Tibial artery (tissue), 4 donors: ENCODE measurements at regions of chr7 and their contacts with region 1.

Region 1: DNA sequence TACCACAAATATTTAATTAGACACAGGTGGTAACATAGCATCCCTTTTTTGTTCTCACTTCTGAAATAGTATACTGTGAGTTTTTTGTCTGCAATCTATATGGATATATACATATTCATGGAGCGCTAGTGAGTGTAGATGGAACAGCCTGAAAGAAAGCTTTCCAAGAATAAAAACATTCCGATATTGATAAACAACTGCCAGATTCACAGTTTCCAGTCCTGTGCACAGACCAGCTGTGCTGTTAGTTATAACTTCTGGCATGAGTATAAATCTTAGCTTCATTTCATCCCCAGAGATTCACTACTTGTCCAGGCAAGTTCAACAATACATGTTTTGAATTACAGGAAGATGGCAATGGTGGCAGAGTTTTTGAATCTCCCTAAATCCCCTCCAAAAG is 467.1 kb upstream of the STEAP1 start:
- DNase-seq: no peak
- H3K4me3 ChIP-seq: no peak overlapping the region
- H3K27ac ChIP-seq: no peak overlapping the region
- H3K4me1 ChIP-seq: no peaks in the 10 kb centered on the region
- H3K27me3 ChIP-seq: no peaks in the 10 kb centered on the region
- CTCF ChIP-seq: no peak

Region 2: DNA sequence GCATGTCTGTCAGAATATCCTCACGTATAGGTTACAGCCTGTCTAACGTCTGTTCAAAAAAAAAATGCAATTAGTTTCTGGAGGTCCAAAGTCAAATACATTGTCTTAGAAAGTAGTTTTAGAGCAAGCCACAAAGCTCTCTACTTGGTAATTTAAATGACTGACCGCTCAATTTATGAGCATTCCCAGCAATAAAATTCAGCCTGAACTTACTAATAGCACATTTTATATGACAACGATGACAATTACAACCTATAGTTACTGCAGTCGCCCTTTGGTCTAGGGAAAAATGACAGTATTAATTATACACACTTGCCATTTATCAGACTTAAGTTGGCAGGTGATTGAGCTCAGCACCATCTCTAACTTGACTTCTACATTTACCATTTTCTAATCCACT is 41.3 kb after region 1 on chr7:
- intact Hi-C with region 1: loop called (anchors 1 kb)
- DNase-seq: no peak
- H3K4me3 ChIP-seq: no peak overlapping the region
- H3K27ac ChIP-seq: no peak overlapping the region
- H3K4me1 ChIP-seq: no peaks in the 10 kb centered on the region
- H3K27me3 ChIP-seq: no peaks in the 10 kb centered on the region
- CTCF ChIP-seq: no peak